ENCODE measurements at regions of chr11 and their contacts with region 1.

Region 1: DNA sequence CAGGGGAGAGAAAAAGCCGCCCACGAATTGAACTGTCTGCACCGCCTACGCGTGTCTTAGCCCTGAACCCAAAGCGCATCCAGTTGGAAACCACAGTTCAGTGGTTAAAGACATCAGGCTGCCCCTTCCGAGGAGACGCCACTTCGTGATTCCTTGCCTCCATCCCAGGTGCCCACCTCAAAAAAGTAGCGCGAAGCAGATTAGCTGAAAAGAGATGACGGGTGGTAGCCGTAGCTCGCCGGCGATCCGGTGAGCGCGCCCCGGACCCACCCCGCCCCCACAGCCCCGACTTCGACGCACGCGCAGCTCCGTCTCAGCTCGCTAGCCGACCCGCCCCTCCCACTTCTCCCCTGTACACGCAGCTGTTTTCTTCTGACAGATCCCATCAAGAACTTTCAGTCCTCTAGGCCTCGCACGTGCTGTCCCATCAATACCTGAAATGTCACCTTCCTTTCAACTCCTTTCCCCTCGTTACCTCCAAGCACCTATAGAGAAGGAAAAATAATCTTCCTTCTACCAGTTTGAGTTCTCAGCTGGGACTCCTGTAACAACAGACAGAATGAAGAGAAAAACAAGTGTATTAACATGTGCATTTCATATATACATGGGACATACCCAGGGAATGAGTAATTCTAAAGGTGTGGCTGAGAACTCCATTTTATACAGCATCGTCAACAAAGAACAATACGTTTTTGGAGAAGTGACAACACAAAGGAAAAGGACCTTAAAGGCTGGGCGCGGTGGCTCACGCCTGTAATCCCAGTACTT is 49.5 kb downstream of the OR4D9 start:
- DNase-seq: peak; percentile 83 to 92
- ATAC-seq: peak; percentile 41 to 51
- H3K4me3 ChIP-seq: peak overlapping the region; percentile 87
- H3K27ac ChIP-seq: peak overlapping the region; percentile 86 to 88
- H3K4me1 ChIP-seq: 0 out of 3 replicates have a peak, but pooled peaks cover 5% of the 10 kb centered on the region
- CTCF ChIP-seq: no peak
- EP300 ChIP-seq: no peak
- POLR2A ChIP-seq: no peak
- RAD21 ChIP-seq: no peak

Region 2: DNA sequence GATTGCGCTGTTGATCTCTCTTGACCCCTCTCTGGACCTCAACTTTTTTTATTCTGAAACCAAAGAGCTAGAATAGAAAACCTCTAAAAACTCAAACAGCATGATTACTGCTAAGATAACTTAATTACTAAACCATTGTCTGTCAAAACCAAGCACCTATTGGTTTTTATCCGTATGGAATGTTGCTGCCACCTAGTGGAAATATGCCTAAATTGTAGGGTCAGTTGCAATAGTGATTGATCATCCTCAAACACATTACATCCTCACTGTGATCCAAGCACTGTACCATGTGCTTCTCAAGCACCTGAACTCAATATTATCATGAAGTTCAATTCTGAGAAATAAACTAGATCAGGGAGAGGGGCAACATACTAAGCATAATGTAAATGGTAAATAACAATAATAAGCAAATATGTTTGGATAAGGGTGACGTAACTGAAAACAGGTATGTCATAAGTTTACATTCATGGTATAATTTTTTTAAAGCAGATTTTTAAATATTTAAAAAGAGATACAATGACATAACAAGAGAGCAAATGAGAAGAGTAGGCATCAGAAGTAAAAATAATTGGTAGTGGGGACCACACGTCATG is 130.9 kb before region 1 on chr11:
- CTCF ChIA-PET with region 1: no interaction called
- POLR2A ChIA-PET with region 1: no interaction called
- DNase-seq: peak; percentile 29 to 50
- ATAC-seq: peak in 1 of 2 experiments; percentile 81; a peak in 4 of 6 replicates
- H3K4me3 ChIP-seq: no peak overlapping the region
- H3K27ac ChIP-seq: no peak overlapping the region
- H3K4me1 ChIP-seq: no peaks in the 10 kb centered on the region
- CTCF ChIP-seq: peak; percentile 86
- EP300 ChIP-seq: no peak
- POLR2A ChIP-seq: no peak
- RAD21 ChIP-seq: peak; percentile 70

Region 3: DNA sequence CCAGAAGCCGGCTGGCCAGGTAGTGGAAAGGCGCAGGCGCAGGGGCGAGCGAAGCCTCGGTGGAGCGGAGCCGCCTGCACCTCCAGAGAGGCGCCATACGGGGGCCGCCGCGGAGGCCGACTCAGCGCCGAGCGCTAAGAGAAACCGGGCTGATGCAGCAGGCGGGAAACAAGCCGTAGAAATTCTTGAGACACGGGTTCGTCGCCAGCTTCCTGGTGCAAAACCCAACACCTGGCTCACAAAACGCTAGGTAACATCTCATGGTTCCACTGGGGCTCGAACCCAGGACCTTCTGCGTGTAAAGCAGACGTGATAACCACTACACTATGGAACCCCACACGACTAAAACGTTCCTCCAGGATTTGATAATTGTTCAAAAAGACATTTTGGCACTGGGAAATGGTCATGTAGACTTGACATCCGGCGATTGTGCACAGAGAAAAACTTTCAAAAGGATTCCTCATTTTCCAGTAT is 10.5 kb before region 1 on chr11:
- CTCF ChIA-PET with region 1: interaction called, 9 read pairs
- POLR2A ChIA-PET with region 1: interaction called, 16 read pairs
- DNase-seq: peak; percentile 76 to 99
- ATAC-seq: peak; percentile 90 to 92
- H3K4me3 ChIP-seq: peak overlapping the region; percentile 68
- H3K27ac ChIP-seq: peak overlapping the region; percentile 86 to 95
- H3K4me1 ChIP-seq: peaks cover 32% of the 10 kb centered on the region
- CTCF ChIP-seq: no peak
- EP300 ChIP-seq: no peak
- POLR2A ChIP-seq: no peak
- RAD21 ChIP-seq: peak in 1 of 2 experiments; percentile 6; a peak in 1 of 5 replicates

Region 4: GRCh38 chr11:59615637-59616395 is 54.9 kb after region 1 on chr11 and contains the start of gene OSBP:
- CTCF ChIA-PET with region 1: interaction called, 3 read pairs
- POLR2A ChIA-PET with region 1: interaction called, 18 read pairs
- DNase-seq: peak; percentile 99 to 100
- ATAC-seq: peak; percentile 91 to 95
- H3K4me3 ChIP-seq: peak within 1 kb of the TSS; percentile 75
- H3K27ac ChIP-seq: peak within 1 kb of the TSS; percentile 84 to 97
- H3K4me1 ChIP-seq: peaks cover 29% of the 10 kb centered on the region; the same call in 2 of the 3 replicates
- CTCF ChIP-seq: no peak
- EP300 ChIP-seq: no peak
- POLR2A ChIP-seq: peak; percentile 56
- RAD21 ChIP-seq: no peak
- polyA plus RNA-seq, gene OSBP: 31.7 and 39.6 TPM in 2 replicates

Measured in A549 (cell line).